Adrenal gland (tissue), 19 donors: ENCODE measurements at regions of chr1 and their contacts with region 1.

Region 1: GRCh38 chr1:76330991-76331603 is 256.6 kb downstream of the ST6GALNAC3 start:
- DNase-seq: peak; percentile 38 to 79 (median 56)
- H3K4me3 ChIP-seq: no peak overlapping the region
- H3K27ac ChIP-seq: no peak overlapping the region
- H3K4me1 ChIP-seq: peaks cover 0 to 6% of the 10 kb centered on the region in 2 donors
- H3K27me3 ChIP-seq: no peaks in the 10 kb centered on the region
- CTCF ChIP-seq: peak; percentile 85 to 94 (median 88)
- POLR2A ChIP-seq: no peak

Region 2: DNA sequence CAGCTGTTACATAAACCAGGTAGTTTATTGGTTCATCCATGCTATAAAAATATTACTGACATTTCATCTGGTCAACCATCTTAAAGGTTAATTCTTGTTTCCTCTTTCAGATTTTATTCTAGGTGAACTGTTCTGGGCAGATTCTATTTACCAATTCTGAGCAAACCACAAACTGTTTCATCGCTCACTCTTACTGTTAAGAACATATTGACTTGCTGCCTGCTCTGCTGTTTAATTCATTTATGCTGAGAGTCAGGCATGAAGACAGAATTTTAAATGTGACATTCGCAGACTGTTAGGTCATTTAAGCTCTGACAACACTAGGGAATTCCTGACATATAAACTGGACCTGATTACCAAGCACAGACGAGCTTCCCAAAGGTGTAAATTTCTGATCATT is 789.9 kb after region 1 on chr1:
- intact Hi-C with region 1: loop called in 1 of 2 experiments (anchors 5 kb)
- DNase-seq: no peak
- H3K4me3 ChIP-seq: no peak overlapping the region
- H3K27ac ChIP-seq: no peak overlapping the region
- H3K4me1 ChIP-seq: no peaks in the 10 kb centered on the region
- H3K27me3 ChIP-seq: no peaks in the 10 kb centered on the region
- CTCF ChIP-seq: no peak
- POLR2A ChIP-seq: no peak